ENCODE measurements at regions of chr3 and their contacts with region 1.

Region 1: DNA sequence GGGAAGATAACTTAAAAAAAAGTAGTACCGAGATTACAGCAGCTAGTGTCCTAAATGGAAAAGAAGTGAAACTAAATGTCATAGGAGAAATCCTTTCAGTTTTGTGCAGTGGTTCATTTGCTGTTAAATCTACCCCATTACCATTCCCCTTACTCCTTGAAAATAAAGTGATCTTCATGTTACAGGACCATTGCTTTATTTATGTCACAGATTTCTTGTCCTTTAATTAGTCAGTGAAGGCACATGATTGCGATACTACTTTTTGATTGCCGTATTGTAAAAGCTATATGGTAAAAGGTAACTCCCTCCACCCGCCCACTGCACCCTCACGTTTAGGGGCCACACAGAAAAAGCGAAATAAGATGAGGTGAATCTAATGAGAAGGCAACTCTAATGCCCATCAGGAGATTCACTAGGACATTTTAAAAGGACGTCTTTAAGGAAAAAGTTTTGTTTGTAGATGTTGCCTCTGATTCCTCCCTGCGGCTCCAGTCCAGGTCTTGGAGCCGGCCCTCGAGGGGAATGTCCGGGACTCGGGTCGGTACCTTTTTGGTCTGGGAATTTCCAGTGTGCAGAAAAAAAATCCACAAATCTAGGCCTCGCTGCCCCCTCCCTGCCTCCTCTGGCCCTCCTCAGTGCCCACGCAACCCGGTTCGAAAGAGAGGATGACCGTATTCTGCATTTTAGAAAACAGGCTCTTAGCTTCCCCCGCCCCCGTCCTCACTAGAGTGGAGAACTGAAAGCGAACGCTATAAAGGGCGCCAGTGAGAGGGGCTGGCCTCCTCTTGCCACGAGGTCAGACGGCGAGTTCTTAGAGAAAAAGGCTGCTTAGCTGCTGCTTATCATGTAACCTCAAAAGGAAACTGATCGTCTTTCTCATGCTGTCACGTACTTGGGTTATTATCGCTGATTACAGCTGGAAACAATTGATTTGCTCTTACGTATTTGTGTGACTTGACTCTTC is 21.8 kb upstream of the NFKBIZ start:
- DNase-seq: peak; percentile 83
- H3K4me3 Mint-ChIP-seq: peak overlapping the region; percentile 82
- H3K27ac Mint-ChIP-seq: peak overlapping the region; percentile 90
- H3K4me1 Mint-ChIP-seq: peaks cover 53% of the 10 kb centered on the region
- H3K27me3 Mint-ChIP-seq: no peaks in the 10 kb centered on the region

Region 2: DNA sequence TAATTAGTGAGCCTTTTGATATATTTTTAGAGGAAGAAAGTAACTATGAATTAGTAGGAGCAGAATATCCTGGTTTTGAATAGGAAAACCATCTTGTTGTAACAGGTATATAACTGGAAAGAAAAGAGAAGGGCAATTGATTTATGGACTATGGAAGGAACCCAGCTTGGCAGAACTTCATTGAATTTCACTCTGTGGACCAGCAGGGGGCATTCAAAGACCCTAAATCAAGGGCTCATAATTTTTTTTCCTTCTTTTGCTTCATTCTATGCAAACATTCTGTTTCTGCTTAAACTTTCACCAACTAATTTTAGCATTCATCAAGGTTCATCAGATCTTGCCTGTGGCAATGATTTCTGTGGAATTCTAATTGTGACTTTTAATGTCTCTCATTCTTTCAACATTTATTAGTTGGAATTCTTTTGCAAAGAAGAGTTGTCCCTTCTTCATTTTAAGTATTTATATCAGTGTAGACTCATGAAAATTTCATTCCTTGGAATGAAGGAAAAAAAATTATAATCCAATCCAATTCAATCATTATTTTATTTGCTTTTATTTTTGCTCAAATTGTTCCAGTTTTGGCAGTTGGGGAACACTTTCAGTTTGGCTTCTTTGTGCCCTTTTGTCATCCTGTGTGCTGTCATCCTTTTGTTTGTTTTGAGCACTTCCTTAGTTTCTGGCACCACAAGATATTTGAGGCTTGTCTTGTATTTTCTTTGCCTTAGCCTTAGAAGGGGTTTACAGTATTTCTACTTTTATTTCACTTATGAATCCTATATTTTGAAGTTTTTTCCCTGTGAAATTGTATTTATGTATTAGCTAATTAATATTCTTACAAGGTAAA is 18.1 kb before region 1 on chr3:
- CTCF ChIA-PET with region 1: interaction called, 7 read pairs
- POLR2A ChIA-PET with region 1: interaction called, 13 read pairs
- DNase-seq: no peak
- H3K4me3 Mint-ChIP-seq: no peak overlapping the region
- H3K27ac Mint-ChIP-seq: no peak overlapping the region
- H3K4me1 Mint-ChIP-seq: peaks cover 59% of the 10 kb centered on the region
- H3K27me3 Mint-ChIP-seq: no peaks in the 10 kb centered on the region

Region 3: GRCh38 chr3:101913173-101913572 is 85.7 kb after region 1 on chr3:
- CTCF ChIA-PET with region 1: no interaction called
- POLR2A ChIA-PET with region 1: no interaction called
- DNase-seq: no peak
- H3K4me3 Mint-ChIP-seq: no peak overlapping the region
- H3K27ac Mint-ChIP-seq: no peak overlapping the region
- H3K4me1 Mint-ChIP-seq: no peaks in the 10 kb centered on the region
- H3K27me3 Mint-ChIP-seq: peaks cover 12% of the 10 kb centered on the region